Activated CD4-positive, alpha-beta memory T cell treated with anti-CD3 and anti-CD28 coated beads for 36 hours (primary cell): ENCODE measurements at regions of chr1 and their contacts with region 1.

Region 1: GRCh38 chr1:3618881-3619671 is 5.7 kb upstream of the TPRG1L start:
- DNase-seq: peak; percentile 77
- H3K4me3 Mint-ChIP-seq: no peak overlapping the region
- H3K27ac Mint-ChIP-seq: no peak overlapping the region
- H3K4me1 Mint-ChIP-seq: peaks cover 22% of the 10 kb centered on the region
- H3K27me3 Mint-ChIP-seq: no peaks in the 10 kb centered on the region

Region 2: GRCh38 chr1:3477241-3477995 is 141.7 kb before region 1 on chr1:
- CTCF ChIA-PET with region 1: no interaction called
- POLR2A ChIA-PET with region 1: no interaction called
- intact Hi-C with region 1: no loop called
- DNase-seq: no peak
- H3K4me3 Mint-ChIP-seq: no peak overlapping the region
- H3K27ac Mint-ChIP-seq: no peak overlapping the region
- H3K4me1 Mint-ChIP-seq: no peaks in the 10 kb centered on the region
- H3K27me3 Mint-ChIP-seq: no peaks in the 10 kb centered on the region

Region 3: GRCh38 chr1:3491291-3492246 is 127.5 kb before region 1 on chr1:
- CTCF ChIA-PET with region 1: interaction called, 43 read pairs
- POLR2A ChIA-PET with region 1: no interaction called
- intact Hi-C with region 1: loop called (anchors 1 kb)
- DNase-seq: peak; percentile 88
- H3K4me3 Mint-ChIP-seq: no peak overlapping the region
- H3K27ac Mint-ChIP-seq: no peak overlapping the region
- H3K4me1 Mint-ChIP-seq: peaks cover 5% of the 10 kb centered on the region
- H3K27me3 Mint-ChIP-seq: no peaks in the 10 kb centered on the region

Region 4: DNA sequence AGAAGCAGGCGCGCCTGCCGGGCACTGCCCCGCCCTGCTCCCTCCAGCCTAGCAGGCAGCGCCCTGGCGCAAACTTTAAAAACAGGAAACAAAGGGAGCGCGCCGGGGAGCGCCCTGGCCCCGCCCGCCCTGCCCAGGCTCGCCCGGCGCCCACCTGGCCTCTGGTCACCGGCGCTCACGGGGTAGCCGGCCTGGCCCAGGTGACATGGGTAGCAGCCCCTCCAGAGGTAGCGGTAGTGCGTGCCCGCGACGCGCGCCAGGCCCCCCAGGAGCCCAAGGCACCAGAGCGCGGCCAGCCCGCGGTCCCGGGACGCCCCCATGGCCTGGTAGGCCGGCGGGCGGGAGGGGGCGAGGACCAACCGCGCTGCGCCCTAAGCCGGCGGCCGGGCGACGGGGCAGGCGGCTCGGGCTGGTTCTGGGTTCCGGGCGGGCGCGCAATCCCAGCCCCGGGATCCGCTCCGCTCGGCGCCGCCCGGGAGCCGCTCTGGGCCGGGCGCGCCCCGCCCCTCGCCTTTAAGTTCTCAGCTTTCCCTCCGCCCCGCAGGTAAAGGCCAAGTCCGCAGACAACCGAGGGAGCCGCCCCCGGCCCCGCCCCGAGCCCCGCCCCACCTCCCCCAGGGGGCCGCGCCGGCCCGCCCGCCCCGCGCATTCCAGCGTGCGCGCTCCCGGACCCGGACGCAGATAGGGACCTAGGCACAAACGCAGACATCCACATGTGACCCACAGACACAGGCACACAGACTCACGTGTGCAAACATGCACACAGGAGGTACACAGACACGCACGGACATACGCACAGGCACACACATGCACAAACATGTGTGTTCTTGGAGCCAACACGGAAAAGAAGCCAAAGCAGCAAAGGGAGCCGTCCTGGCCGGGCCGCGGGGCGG is 87.9 kb before region 1 on chr1:
- CTCF ChIA-PET with region 1: interaction called, 10 read pairs
- POLR2A ChIA-PET with region 1: no interaction called
- intact Hi-C with region 1: no loop called
- DNase-seq: peak; percentile 90
- H3K4me3 Mint-ChIP-seq: peak overlapping the region; percentile 78
- H3K27ac Mint-ChIP-seq: peak overlapping the region; percentile 38
- H3K4me1 Mint-ChIP-seq: peaks cover 10% of the 10 kb centered on the region
- H3K27me3 Mint-ChIP-seq: no peaks in the 10 kb centered on the region

Region 5: GRCh38 chr1:3631330-3632262 is 12.5 kb after region 1 on chr1:
- CTCF ChIA-PET with region 1: interaction called, 30 read pairs
- POLR2A ChIA-PET with region 1: no interaction called
- intact Hi-C with region 1: no loop called
- DNase-seq: no peak
- H3K4me3 Mint-ChIP-seq: no peak overlapping the region
- H3K27ac Mint-ChIP-seq: no peak overlapping the region
- H3K4me1 Mint-ChIP-seq: peaks cover 3% of the 10 kb centered on the region
- H3K27me3 Mint-ChIP-seq: no peaks in the 10 kb centered on the region

Region 6: DNA sequence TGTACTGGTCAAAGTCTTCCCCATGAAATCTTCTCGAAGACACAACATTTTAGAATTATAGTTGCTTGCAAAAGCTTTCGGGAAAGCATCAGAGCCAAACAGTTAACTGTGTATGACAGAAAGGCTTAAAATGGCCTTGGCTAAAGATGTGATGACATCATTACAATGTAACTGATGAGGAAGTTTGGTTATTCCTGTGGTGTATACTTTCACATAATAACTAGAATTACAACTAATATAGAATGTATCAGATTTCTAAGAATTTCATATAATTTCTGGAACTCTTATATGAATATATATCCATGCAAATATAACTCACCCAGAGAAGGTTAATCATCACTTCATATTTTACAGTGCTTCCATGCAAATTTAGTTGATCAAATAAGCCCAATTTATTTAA is 41.6 kb after region 1 on chr1:
- CTCF ChIA-PET with region 1: no interaction called
- POLR2A ChIA-PET with region 1: no interaction called
- intact Hi-C with region 1: no loop called
- DNase-seq: no peak
- H3K4me3 Mint-ChIP-seq: no peak overlapping the region
- H3K27ac Mint-ChIP-seq: no peak overlapping the region
- H3K4me1 Mint-ChIP-seq: peaks cover 13% of the 10 kb centered on the region
- H3K27me3 Mint-ChIP-seq: peaks cover 21% of the 10 kb centered on the region